Common myeloid progenitor, CD34-positive (primary cell): ENCODE measurements at regions of chr7 and their contacts with region 1.

Region 1: DNA sequence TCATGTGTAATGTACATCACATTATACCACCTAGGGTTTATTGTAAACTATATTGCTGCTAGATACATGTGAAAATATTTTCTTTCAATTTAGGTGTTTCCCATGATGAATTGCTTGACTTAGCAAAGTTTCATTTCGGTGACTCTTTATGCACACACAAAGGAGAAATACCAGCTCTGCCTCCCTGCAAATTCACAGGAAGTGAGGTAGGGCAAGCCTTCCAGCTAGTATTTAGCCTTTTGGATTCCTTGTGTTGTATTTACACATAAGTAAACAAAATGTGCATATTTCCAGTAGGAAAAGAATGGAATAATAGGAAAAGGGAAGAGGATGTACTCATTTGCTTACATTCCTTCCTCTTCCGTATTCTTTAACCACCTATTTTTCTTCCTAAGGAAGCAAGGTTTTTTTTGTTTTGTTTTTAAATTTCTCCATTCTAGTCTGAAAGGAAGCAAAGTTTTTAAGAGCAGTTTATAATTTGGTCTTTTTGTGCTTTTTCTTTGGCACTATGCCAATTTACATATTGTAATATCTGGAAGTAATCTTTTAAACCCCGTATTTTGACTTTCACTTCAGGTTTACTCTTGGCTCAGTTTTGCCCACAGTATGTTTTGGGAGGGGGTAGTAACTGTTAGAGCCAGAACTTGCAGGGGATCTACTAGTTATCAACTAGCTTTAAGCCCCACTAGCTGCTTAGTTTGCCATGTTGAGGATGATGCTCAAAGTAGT is 10.4 kb downstream of the PMPCB start:
- DNase-seq: peak in 1 of 3 donors; percentile 8
- H3K4me3 ChIP-seq: no peak overlapping the region
- H3K27ac ChIP-seq: no peak overlapping the region
- H3K4me1 ChIP-seq: no peaks in the 10 kb centered on the region
- H3K27me3 ChIP-seq: no peaks in the 10 kb centered on the region

Region 2: DNA sequence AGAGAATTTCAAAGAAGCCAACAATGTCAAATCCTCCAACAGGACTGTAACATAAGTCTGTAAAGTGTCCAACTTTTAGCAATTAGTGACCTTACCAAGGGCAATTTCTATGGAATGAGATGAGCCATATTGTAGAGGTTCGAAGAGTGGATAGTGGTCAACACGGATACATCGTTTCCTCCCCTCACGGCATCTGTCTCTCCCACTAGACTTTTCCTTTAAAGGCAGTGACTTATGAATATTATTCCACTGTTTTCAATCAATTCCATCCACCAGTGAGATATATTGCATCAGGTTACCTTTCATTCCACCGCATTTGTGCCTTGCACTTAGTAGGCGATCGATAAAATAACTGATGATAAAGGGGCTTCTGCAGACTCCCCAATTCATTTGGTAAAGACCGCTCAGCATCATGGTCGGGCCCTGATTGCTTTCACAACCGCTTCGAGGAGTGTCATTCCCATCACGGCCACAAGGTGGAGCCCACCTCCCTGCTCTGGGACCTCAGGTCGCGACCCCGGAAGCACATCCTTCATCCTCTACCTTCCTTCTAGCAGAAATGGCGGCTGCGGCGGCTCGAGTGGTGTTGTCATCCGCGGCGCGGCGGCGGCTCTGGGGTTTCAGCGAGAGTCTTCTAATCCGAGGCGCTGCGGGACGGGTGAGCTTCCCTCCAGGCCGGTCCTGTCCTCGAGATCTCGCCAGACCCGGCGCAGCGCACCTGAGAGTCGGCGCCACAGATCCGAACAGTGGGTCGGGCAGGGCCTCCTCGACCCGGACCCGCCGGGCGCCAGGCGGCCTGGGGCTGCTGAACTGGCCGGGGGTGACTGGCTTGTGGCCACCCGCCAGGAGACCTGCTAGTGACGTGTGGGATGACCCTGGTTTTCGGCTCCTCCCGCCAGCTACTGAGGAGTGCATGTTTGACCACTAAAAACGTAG is 10.5 kb before region 1 on chr7 and contains the start of gene PMPCB:
- CTCF ChIA-PET with region 1: interaction called, 13 read pairs
- POLR2A ChIA-PET with region 1: no interaction called
- DNase-seq: peak; percentile 92 to 96 (median 95)
- H3K4me3 ChIP-seq: peak within 1 kb of the TSS; percentile 68 to 94 (median 89)
- H3K27ac ChIP-seq: peak within 1 kb of the TSS; percentile 60 to 88
- H3K4me1 ChIP-seq: peaks cover 2 to 15% (median 7%) of the 10 kb centered on the region in 4 experiments
- H3K27me3 ChIP-seq: no peaks in the 10 kb centered on the region

Region 3: DNA sequence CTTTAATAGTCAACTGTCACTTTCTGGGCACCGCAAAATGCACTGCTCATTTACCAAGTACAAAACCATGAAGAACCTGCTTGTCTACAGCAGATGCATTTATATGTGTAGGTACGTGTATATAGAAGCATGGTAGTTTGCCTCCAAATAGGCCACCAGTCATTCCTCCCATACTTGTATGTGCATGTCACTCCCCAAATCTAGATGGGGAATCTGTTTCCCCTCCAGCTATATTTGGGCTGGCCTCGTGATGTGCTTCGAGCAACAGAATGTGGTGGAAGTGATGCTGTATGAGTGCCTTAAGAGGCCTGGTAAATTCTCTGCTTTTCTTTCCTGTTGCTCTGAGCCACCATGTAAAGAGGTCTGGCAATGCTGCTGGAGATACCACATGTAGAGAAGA is 86.9 kb after region 1 on chr7:
- CTCF ChIA-PET with region 1: no interaction called
- POLR2A ChIA-PET with region 1: no interaction called
- DNase-seq: no peak
- H3K4me3 ChIP-seq: no peak overlapping the region
- H3K27ac ChIP-seq: no peak overlapping the region
- H3K4me1 ChIP-seq: peaks cover 0 to 6% (median 0%) of the 10 kb centered on the region in 4 experiments
- H3K27me3 ChIP-seq: no peaks in the 10 kb centered on the region

Region 4: GRCh38 chr7:103474956-103475355 is 167.3 kb after region 1 on chr7:
- CTCF ChIA-PET with region 1: no interaction called
- POLR2A ChIA-PET with region 1: no interaction called
- DNase-seq: no peak
- H3K4me3 ChIP-seq: no peak overlapping the region
- H3K27ac ChIP-seq: no peak overlapping the region
- H3K4me1 ChIP-seq: no peaks in the 10 kb centered on the region
- H3K27me3 ChIP-seq: peaks cover 0 to 4% (median 2%) of the 10 kb centered on the region in 5 experiments